Pancreas (tissue), 10 donors: ENCODE measurements at regions of chr12 and their contacts with region 1.

Region 1: DNA sequence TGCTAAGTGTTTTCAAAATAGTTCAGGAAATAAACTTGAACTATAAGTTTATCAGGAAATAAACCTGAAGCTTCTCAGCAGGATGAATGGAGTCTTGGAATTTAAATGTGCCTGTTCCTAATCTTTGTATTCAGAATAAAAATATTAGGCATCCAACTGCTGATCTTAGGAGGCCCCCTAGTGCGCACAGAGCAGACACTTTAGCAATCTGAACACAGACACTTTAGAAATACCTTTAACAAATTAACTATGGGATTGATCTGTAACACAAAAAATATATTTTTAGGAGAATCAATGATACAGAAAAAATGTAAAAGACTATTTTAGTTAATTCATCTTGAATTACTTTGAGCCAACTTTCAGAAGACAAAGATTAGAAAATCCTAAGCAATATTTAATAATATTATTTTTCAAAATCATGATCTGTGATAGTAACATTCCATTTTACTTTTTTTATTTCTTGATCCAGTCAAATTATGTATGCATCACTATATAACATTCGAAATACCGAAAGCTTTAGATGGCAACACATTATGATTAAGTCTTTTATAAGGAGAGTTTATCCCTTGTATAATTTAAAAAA is 80.9 kb downstream of the SLC41A2 start:
- DNase-seq: peak in 1 of 6 donors; percentile 23
- ATAC-seq: peak in 3 of 4 donors; percentile 75 to 88 (median 86)
- H3K4me3 ChIP-seq: no peak overlapping the region
- H3K27ac ChIP-seq: no peak overlapping the region
- H3K4me1 ChIP-seq: no peaks in the 10 kb centered on the region
- H3K27me3 ChIP-seq: no peaks in the 10 kb centered on the region
- CTCF ChIP-seq: peak in 3 of 4 donors; percentile 34 to 42 (median 35)

Region 2: GRCh38 chr12:104381731-104382480 is 495.3 kb before region 1 on chr12:
- intact Hi-C with region 1: loop called in 1 of 3 experiments (anchors 10 kb)
- DNase-seq: peak; percentile 67 to 88 (median 83)
- ATAC-seq: peak; percentile 88 to 99 (median 96)
- H3K4me3 ChIP-seq: no peak overlapping the region
- H3K27ac ChIP-seq: no peak overlapping the region
- H3K4me1 ChIP-seq: no peaks in the 10 kb centered on the region
- H3K27me3 ChIP-seq: no peaks in the 10 kb centered on the region
- CTCF ChIP-seq: peak; percentile 89 to 91 (median 90)

Region 3: DNA sequence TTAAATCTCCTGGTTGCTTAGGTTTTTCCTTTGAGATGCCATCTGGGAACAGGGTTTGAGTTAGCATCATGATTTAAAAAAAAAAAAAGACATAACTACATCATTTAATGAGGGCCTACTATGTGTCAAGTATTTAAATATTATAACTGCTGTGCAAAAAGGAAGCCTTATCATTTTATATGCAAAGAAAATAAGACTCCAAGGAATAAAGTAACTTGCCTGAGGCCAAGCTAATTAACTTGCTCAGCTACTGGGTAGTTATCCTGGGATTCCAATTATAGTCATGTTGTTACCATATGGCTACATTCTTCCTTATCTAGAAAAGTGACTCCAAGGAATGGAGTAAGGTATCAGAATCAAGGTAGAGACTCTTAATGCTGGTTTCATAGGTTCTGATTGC is 42.6 kb before region 1 on chr12:
- intact Hi-C with region 1: no loop called
- DNase-seq: no peak
- ATAC-seq: no peak
- H3K4me3 ChIP-seq: no peak overlapping the region
- H3K27ac ChIP-seq: no peak overlapping the region
- H3K4me1 ChIP-seq: no peaks in the 10 kb centered on the region
- H3K27me3 ChIP-seq: no peaks in the 10 kb centered on the region
- CTCF ChIP-seq: no peak

Region 4: GRCh38 chr12:105611340-105611739 is 734.1 kb after region 1 on chr12:
- intact Hi-C with region 1: no loop called
- DNase-seq: no peak
- ATAC-seq: no peak
- H3K4me3 ChIP-seq: no peak overlapping the region
- H3K27ac ChIP-seq: no peak overlapping the region
- H3K4me1 ChIP-seq: no peaks in the 10 kb centered on the region
- H3K27me3 ChIP-seq: no peaks in the 10 kb centered on the region
- CTCF ChIP-seq: no peak